AG04449 (cell line): ENCODE measurements at regions of chr17 and their contacts with region 1.

Region 1: GRCh38 chr17:38729886-38730525 is at the start of gene CISD3:
- DNase-seq: no peak
- H3K4me3 ChIP-seq: peak within 1 kb of the TSS; percentile 77
- CTCF ChIP-seq: peak; percentile 56

Region 2: GRCh38 chr17:38663125-38663751 is 66.8 kb before region 1 on chr17:
- CTCF ChIA-PET with region 1: no interaction called
- POLR2A ChIA-PET with region 1: no interaction called
- DNase-seq: no peak
- H3K4me3 ChIP-seq: no peak overlapping the region
- CTCF ChIP-seq: peak; percentile 90

Region 3: GRCh38 chr17:38674749-38675615 is 55.0 kb before region 1 on chr17 and contains the start of gene EPOP:
- CTCF ChIA-PET with region 1: interaction called, 84 read pairs
- POLR2A ChIA-PET with region 1: no interaction called
- DNase-seq: no peak
- H3K4me3 ChIP-seq: peak within 1 kb of the TSS; percentile 53
- CTCF ChIP-seq: no peak

Region 4: DNA sequence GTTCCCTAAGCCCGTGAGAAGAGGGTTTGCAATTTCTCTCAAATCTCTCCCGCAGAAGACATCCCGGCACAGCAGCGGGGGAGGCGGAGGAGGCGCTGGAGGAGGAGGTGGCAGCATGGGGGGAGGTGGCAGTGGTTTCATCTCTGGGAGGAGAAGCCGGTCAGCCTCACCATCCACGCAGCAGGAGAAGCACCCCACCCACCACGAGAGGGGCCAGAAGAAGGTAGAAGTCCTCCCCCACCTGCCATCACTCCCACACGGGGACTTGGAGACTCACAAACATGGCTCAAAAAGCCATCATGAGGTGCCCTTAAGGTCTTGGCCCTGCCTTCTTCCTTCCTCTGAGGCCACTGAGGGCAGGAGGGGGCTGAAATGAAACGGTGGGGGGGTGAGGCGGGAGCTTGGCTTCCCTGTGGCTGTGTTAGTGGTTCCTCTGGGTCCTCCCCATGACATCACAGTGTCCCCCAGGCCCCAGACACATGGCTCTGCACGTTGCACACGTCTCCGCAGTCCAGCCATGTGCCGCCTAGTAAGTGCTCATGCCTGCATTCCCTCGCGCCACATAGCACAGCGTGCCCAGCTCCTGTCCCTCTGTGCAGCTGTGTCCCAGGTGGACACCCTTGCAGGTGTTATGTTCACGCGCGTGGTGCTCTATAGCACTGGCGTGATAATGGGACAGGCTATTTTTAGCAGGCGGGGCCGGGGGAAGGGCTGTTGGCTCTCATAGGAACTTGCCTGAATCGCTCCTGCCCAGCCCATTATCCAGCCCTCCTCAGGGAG is 18.0 kb before region 1 on chr17:
- CTCF ChIA-PET with region 1: interaction called, 22 read pairs
- POLR2A ChIA-PET with region 1: interaction called, 4 read pairs
- DNase-seq: no peak
- H3K4me3 ChIP-seq: no peak overlapping the region
- CTCF ChIP-seq: no peak

Region 5: DNA sequence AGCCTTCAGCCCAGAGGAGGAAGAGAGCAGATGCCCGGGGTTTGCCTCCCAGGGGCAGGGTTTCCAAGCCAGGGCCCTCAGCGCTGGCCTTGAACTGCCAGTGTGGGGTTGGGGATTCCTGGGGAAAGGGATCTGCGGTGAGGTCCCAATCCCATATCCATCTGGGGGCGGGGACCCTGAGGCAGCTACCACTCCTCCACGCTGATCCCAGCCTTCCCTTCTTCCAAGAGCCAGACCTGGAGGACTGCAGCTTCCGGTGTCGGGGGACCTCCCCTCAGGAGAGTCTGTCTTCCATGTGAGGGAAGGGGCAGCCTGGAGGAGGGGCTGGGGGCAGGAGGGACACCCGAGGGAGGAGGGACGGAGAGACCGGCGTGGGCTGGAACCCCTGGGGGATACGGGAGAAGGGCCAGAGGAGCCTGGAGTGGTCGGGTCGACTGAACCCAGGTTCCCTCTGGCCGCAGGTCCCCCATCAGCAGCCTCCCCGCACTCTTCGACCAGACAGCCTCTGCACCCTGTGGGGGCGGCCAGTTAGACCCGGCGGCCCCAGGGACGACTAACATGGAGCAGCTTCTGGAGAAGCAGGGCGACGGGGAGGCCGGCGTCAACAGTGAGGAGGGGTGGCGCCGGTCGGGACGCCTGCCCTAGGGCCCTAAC is 10.6 kb before region 1 on chr17:
- CTCF ChIA-PET with region 1: interaction called, 27 read pairs
- POLR2A ChIA-PET with region 1: no interaction called
- DNase-seq: no peak
- H3K4me3 ChIP-seq: no peak overlapping the region
- CTCF ChIP-seq: no peak